HEK293 (cell line): ENCODE measurements at regions of chr9 and their contacts with region 1.

Region 1: GRCh38 chr9:132507746-132508469 is 74.5 kb upstream of the BARHL1 start:
- H3K4me3 ChIP-seq: no peak overlapping the region
- H3K27ac ChIP-seq: no peak overlapping the region
- H3K4me1 ChIP-seq: no peaks in the 10 kb centered on the region
- CTCF ChIP-seq: peak; percentile 71

Region 2: DNA sequence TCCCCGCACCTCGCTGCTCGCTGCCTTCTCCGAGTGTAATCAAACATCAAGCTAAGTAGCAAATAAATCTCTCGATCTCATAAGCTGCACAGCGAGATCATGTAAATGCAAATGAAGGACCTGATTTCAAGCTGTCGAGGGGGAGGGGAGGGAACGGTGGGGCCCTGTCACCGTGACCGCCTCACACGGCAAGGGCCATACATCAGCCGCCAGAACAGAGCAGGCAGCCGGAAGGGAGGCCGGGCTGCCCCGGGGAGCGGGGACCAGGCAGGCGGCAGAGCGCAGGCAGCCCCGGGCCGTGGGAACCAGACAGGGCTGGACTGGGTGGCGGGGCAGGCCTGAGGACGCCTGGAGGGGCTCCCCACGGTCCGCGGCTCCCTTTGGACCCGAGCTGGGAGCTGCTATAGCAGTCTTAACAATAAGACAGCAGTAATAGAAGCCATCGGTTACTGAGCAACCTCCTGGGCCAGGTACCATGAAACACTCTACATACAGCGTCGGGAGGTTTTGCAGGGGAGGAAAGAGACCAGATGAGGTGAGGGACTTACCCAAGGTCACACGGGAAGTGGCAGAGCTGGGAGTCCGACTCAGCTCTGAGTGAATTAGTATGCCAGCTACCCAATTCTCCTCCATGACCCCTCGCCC is 21.1 kb before region 1 on chr9:
- CTCF ChIA-PET with region 1: interaction called, 13 read pairs
- POLR2A ChIA-PET with region 1: no interaction called
- H3K4me3 ChIP-seq: no peak overlapping the region
- H3K27ac ChIP-seq: no peak overlapping the region
- H3K4me1 ChIP-seq: no peaks in the 10 kb centered on the region
- CTCF ChIP-seq: no peak

Region 3: DNA sequence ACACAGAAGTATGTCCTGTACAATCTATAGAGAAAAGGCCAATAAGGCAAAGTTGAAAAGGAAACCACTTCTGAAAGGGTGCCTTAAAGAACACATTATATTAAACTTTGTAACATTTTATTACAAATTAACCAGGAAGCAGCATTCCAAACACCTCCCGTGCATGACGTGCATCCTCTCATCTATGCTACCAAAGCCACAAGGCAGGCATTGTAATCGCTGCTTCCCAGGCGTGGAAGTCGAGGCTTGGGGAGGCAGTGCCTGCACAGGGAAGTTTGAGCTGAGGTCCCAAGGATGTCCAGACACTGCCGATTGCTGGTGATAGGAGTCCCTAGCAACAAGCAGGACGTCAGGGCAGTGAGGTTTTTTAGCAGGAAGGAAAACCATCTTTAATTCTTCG is 30.2 kb after region 1 on chr9:
- CTCF ChIA-PET with region 1: interaction called, 14 read pairs
- POLR2A ChIA-PET with region 1: no interaction called
- H3K4me3 ChIP-seq: no peak overlapping the region
- H3K27ac ChIP-seq: no peak overlapping the region
- H3K4me1 ChIP-seq: no peaks in the 10 kb centered on the region
- CTCF ChIP-seq: no peak

Region 4: DNA sequence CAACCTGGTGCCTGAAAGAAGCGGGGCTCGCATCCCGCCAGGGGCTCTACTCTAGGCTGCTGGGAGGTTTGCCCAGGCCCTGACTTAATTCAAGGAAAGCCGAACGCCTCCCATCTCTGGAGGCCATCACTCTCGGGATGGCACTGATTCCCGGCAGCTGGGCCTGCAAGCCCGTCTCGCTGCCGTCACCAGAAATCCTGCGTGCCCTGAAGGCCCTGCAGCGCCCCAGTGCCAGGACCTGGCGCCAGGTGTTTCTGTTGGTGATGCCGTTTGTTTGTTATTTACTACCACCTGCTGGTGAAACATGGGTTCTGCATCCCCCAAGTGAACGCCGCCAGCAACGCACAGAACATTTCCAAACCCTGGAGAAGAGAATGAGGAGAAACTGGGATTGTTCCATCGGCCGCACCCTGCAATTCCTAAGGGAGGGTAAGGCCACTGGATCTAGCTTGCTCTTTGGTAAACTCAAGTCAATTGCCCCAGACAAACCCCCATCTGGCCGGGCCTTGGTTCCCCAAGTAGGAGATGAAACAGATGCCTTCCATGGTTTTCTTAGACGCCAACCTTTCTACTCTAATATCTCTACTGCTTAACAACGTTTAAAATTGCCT is 292.2 kb after region 1 on chr9:
- CTCF ChIA-PET with region 1: interaction called, 25 read pairs
- POLR2A ChIA-PET with region 1: no interaction called
- H3K4me3 ChIP-seq: no peak overlapping the region
- H3K27ac ChIP-seq: no peak overlapping the region
- H3K4me1 ChIP-seq: peaks cover 8% of the 10 kb centered on the region
- CTCF ChIP-seq: peak; percentile 87